ENCODE measurements at regions of chrX and their contacts with region 1.

Region 1: DNA sequence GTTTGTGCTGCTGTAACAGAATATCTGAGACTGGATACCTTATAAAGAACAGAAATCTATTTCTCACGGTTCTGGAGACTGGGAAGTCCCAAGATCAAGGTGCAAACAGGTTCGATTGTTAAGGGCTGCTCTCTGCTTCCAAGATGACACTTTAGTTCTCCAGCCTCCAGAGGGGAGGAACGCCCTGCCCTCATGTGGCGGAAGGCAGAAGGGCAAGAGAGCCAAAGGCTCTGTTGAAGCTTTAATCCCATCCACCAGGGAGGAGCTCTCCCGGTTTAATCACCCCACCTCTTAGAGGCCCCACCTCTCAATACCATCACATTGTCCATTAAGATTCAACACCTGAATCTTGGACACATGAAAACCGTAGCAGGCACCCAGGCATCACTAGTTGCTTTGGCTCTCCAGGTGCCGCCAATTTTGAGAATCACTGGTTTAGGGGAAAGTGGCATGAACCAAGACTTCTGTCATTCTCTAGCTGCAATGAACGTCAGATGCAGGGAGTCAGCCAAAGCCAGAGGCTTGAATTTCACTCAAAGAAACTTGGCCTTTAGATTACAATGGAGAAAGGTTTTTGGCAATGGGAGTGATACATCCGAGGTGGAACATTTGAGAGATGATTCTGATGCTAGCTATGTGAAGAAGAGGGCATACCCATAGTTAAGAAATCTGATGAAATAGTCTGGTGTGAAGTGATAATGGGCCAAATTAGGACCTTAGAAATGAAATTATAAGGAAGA is 15.7 kb downstream of the FHL1 start:
- DNase-seq: peak in 8 of 9 donors; percentile 10 to 50 (median 36)
- ATAC-seq: peak; percentile 75
- H3K4me3 ChIP-seq: no peak overlapping the region
- H3K4me3 Mint-ChIP-seq: no peak overlapping the region
- H3K27ac ChIP-seq: no peak overlapping the region
- H3K27ac Mint-ChIP-seq: no peak overlapping the region
- H3K4me1 ChIP-seq: no peaks in the 10 kb centered on the region
- H3K4me1 Mint-ChIP-seq: peaks cover 0 to 18% (median 4%) of the 10 kb centered on the region in 7 donors
- H3K27me3 ChIP-seq: no peaks in the 10 kb centered on the region
- H3K27me3 Mint-ChIP-seq: no peaks in the 10 kb centered on the region

Region 2: DNA sequence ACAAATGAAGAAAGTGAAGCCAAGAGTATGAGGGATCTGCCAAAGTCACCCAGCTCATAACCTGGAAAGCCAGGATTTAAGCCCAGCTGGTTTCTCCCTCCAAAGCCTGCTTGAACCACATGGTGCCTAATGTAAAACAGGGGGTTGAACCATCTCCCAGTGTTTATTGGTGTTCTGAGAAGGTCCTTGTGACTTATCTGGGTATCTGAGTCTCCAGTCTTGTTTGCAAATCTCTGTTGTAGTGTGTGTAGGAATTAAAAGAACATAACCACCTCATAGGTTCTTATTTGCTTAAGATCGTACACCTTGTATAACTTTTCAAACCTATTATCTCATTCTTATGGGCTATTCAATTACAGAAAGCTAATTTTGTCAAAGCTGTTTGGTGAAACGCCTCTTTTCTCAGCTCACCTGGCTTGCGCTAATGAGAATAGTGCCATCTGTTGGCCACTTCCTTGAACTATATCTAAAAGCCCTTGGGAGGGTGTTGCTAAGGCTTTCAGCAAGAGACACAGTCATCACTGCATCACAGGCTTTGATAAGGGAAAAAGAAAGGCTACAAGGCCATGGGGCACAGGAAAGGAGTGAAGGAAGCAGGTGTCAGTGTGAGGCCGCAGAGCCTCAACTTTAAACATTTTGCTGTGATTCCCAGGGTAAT is 1076.7 kb before region 1 on chrX:
- CTCF ChIA-PET with region 1: no interaction called
- POLR2A ChIA-PET with region 1: no interaction called
- intact Hi-C with region 1: loop called in 1 of 2 experiments (anchors 5 kb)
- DNase-seq: peak in 7 of 9 donors; percentile 42 to 72 (median 62)
- ATAC-seq: peak; percentile 100
- H3K4me3 ChIP-seq: no peak overlapping the region
- H3K4me3 Mint-ChIP-seq: no peak overlapping the region
- H3K27ac ChIP-seq: no peak overlapping the region
- H3K27ac Mint-ChIP-seq: peak overlapping the region in 2 of 9 donors; percentile 11 to 22
- H3K4me1 ChIP-seq: no peaks in the 10 kb centered on the region
- H3K4me1 Mint-ChIP-seq: peaks cover 0 to 6% (median 5%) of the 10 kb centered on the region in 7 donors
- H3K27me3 ChIP-seq: no peaks in the 10 kb centered on the region
- H3K27me3 Mint-ChIP-seq: peaks cover 0 to 6% (median 0%) of the 10 kb centered on the region in 5 donors

Region 3: DNA sequence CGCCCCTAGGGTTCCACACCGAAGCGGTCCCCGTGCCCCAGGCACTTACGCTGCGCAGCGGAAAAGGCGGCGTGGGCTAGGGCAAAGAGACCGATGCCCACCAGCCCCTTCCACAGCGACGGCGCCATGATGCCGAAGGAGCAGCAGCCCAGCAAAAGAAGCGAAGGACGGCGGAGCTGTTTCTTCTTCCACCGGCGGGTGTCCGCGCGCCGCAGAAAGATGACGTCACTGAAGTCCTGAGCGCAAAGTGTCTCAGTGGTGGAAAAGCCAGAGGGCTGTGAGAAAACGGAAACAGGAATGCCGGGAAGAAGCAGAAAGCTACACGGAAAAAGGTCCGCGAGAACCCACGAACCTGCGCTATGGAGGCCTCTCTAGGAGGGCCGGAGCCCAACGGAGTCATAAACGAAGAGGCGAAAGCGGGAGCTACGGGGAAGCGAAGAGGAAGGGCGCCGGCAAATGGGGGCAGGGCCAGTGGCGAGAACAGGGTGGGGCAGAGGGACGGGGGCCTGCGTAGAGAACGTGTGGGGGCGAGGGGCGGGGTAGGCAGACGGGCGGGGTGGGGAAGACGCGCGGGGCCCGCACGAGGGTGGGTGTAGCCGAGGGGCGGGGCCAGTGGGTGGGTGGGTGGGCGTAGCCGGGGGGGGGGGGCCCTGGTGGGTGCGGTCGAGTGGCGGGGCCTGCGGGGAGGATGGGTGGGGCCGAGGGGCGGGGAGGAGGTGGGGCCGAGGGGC is 189.3 kb before region 1 on chrX and contains the start of gene MMGT1:
- CTCF ChIA-PET with region 1: no interaction called
- POLR2A ChIA-PET with region 1: no interaction called
- intact Hi-C with region 1: no loop called
- DNase-seq: peak; percentile 51 to 82 (median 77)
- ATAC-seq: peak; percentile 91
- H3K4me3 ChIP-seq: peak within 1 kb of the TSS; percentile 91
- H3K4me3 Mint-ChIP-seq: peak within 1 kb of the TSS; percentile 90 to 99 (median 98)
- H3K27ac ChIP-seq: peak within 1 kb of the TSS; percentile 83
- H3K27ac Mint-ChIP-seq: peak within 1 kb of the TSS; percentile 92 to 99 (median 97)
- H3K4me1 ChIP-seq: peaks cover 13 to 17% of the 10 kb centered on the region in 2 donors
- H3K4me1 Mint-ChIP-seq: peaks cover 10 to 37% (median 28%) of the 10 kb centered on the region in 7 donors
- H3K27me3 ChIP-seq: no peaks in the 10 kb centered on the region
- H3K27me3 Mint-ChIP-seq: no peaks in the 10 kb centered on the region
- total RNA-seq, gene MMGT1: 22.0 to 28.4 (median 24.0) TPM

Region 4: GRCh38 chrX:136147315-136147901 is 15.6 kb before region 1 on chrX and contains the start of gene FHL1:
- CTCF ChIA-PET with region 1: interaction called, 3 read pairs
- POLR2A ChIA-PET with region 1: no interaction called
- intact Hi-C with region 1: loop called in 1 of 2 experiments (anchors 2 kb)
- DNase-seq: peak; percentile 12 to 59 (median 45)
- ATAC-seq: peak; percentile 86
- H3K4me3 ChIP-seq: peak within 1 kb of the TSS; percentile 55
- H3K4me3 Mint-ChIP-seq: peak within 1 kb of the TSS; percentile 82 to 94 (median 89)
- H3K27ac ChIP-seq: peak within 1 kb of the TSS; percentile 56
- H3K27ac Mint-ChIP-seq: peak within 1 kb of the TSS; percentile 73 to 97 (median 91)
- H3K4me1 ChIP-seq: peaks cover 0 to 17% of the 10 kb centered on the region in 2 donors
- H3K4me1 Mint-ChIP-seq: peaks cover 23 to 54% (median 41%) of the 10 kb centered on the region in 7 donors
- H3K27me3 ChIP-seq: no peaks in the 10 kb centered on the region
- H3K27me3 Mint-ChIP-seq: peaks cover 0 to 14% (median 0%) of the 10 kb centered on the region in 5 donors
- total RNA-seq, gene FHL1: 14.9 to 26.4 (median 22.4) TPM

Region 5: GRCh38 chrX:136200466-136200865 is 37.5 kb after region 1 on chrX:
- CTCF ChIA-PET with region 1: interaction called, 5 read pairs
- POLR2A ChIA-PET with region 1: no interaction called
- intact Hi-C with region 1: loop called (anchors 1 to 5 kb)
- DNase-seq: peak in 1 of 9 donors; percentile 10
- ATAC-seq: peak; percentile 42
- H3K4me3 ChIP-seq: no peak overlapping the region
- H3K4me3 Mint-ChIP-seq: no peak overlapping the region
- H3K27ac ChIP-seq: no peak overlapping the region
- H3K27ac Mint-ChIP-seq: no peak overlapping the region
- H3K4me1 ChIP-seq: peaks cover 22 to 26% of the 10 kb centered on the region in 2 donors
- H3K4me1 Mint-ChIP-seq: peaks cover 4 to 47% (median 30%) of the 10 kb centered on the region in 7 donors
- H3K27me3 ChIP-seq: no peaks in the 10 kb centered on the region
- H3K27me3 Mint-ChIP-seq: no peaks in the 10 kb centered on the region

Region 6: GRCh38 chrX:136209016-136209738 is 46.2 kb after region 1 on chrX:
- CTCF ChIA-PET with region 1: interaction called, 3 read pairs
- POLR2A ChIA-PET with region 1: no interaction called
- intact Hi-C with region 1: loop called (anchors 2 to 5 kb)
- DNase-seq: peak in 7 of 9 donors; percentile 18 to 45 (median 33)
- ATAC-seq: peak; percentile 70
- H3K4me3 ChIP-seq: no peak overlapping the region
- H3K4me3 Mint-ChIP-seq: no peak overlapping the region
- H3K27ac ChIP-seq: no peak overlapping the region
- H3K27ac Mint-ChIP-seq: peak overlapping the region in 2 of 9 donors; percentile 70
- H3K4me1 ChIP-seq: peaks cover 11 to 15% of the 10 kb centered on the region in 2 donors
- H3K4me1 Mint-ChIP-seq: peaks cover 6 to 16% (median 10%) of the 10 kb centered on the region in 7 donors
- H3K27me3 ChIP-seq: no peaks in the 10 kb centered on the region
- H3K27me3 Mint-ChIP-seq: no peaks in the 10 kb centered on the region

Region 7: DNA sequence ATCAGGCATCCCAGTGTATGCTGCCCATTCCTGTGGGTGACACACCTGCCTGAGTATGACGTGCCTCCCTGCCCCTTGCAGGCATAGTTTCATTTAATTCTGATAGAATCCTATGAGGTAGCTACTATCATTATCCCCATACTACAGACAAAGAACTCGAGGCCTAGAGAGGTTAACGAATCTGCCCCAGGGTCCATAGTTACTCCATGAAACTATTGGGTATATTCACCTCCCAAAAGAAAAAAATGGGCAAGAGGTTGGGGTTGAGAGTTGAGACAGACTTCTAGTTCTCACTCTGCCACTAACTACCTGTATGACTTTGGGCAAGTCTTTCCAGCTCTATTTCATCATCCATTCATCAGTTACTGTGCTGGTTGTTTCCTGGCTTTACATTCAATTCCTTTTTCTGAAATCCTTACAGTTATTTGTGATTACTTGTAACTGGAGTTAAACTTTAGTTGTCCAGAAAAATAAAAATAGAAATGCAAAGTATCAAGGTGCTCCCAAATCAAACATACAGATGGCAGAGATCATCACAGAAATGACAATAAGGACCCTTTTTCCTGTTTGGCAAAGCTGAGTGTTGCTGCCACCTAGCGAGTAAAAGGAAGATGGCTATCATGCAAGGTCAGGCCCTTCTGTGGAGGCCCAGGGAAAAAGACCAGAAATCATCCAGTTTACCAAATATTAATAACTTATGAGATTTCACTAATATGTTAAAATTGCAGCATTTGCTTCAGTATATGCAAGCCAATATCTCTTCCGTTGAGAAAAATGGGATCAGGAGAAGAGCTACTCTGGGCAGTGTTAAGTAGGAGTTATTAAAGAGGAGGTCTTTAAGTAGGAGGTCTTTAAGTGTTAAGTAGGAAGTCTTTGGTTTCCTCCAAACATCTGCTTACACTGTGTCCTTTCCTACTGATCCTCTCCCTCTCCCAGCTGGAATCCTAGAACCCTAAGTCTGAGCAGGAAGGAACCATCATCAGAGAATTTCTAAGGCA is 105.3 kb after region 1 on chrX:
- CTCF ChIA-PET with region 1: interaction called, 3 read pairs
- POLR2A ChIA-PET with region 1: no interaction called
- intact Hi-C with region 1: loop called (anchors 1 to 2 kb)
- DNase-seq: peak in 7 of 9 donors; percentile 12 to 52 (median 43)
- ATAC-seq: peak; percentile 54
- H3K4me3 ChIP-seq: no peak overlapping the region
- H3K4me3 Mint-ChIP-seq: no peak overlapping the region
- H3K27ac ChIP-seq: no peak overlapping the region
- H3K27ac Mint-ChIP-seq: no peak overlapping the region
- H3K4me1 ChIP-seq: no peaks in the 10 kb centered on the region
- H3K4me1 Mint-ChIP-seq: peaks cover 0 to 11% (median 0%) of the 10 kb centered on the region in 7 donors
- H3K27me3 ChIP-seq: no peaks in the 10 kb centered on the region
- H3K27me3 Mint-ChIP-seq: no peaks in the 10 kb centered on the region